ENCODE measurements at regions of chr3 and their contacts with region 1.

Region 1: DNA sequence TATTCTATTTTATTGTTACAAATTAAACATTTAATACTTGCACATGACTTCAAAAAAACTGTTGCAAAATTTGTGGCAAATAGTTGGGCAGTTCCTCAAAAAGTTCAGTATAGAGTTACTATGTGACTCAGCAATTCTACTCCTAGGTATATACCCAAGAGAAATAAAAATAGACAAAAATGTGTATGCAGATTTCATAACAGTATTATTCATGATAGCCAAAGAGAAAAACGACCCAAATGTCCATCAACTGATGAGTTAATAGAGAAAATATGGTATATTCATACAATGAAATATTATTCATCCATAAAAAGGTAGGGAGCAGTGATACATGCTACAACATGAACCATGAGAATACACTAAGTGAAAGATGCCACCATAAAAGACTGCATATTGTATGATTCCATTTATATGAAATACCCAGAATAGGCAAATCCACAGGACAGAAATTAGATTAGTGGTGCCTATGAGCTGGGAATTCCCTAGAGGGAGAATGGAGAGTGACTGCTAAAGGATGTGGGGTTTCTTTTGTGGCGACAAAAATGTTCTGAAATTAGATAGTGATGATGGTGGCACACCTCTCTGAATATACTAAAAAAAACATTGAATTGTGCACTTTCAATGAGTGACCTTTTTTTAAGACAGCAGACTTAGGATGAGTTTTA is 31.6 kb upstream of the CLASP2 start:
- DNase-seq: no peak
- H3K4me3 Mint-ChIP-seq: no peak overlapping the region
- H3K27ac Mint-ChIP-seq: no peak overlapping the region
- H3K4me1 Mint-ChIP-seq: peaks cover 10% of the 10 kb centered on the region
- H3K27me3 Mint-ChIP-seq: no peaks in the 10 kb centered on the region

Region 2: DNA sequence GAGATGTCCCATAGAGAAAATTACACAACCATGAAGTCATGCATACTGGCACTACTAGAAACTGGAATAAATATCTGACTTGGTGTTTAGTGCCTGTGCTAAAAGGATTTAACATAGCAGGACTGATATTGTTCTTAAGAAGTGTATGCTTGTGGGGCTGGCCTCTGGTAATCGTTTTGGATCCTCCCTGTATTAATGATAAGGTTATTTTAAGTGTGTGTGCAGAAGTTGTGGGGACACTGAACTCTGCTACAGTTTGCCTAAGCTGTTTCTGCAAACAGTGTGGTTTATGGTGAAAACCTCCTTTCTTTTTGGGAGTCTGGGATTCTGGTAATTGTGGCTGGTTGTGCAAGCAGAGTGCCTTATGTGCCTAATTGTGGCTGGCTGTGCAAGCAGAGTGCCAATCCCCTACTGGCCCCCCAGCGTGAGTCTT is 152.4 kb before region 1 on chr3:
- intact Hi-C with region 1: no loop called
- DNase-seq: no peak
- H3K4me3 Mint-ChIP-seq: no peak overlapping the region
- H3K27ac Mint-ChIP-seq: no peak overlapping the region
- H3K4me1 Mint-ChIP-seq: no peaks in the 10 kb centered on the region
- H3K27me3 Mint-ChIP-seq: no peaks in the 10 kb centered on the region

Region 3: DNA sequence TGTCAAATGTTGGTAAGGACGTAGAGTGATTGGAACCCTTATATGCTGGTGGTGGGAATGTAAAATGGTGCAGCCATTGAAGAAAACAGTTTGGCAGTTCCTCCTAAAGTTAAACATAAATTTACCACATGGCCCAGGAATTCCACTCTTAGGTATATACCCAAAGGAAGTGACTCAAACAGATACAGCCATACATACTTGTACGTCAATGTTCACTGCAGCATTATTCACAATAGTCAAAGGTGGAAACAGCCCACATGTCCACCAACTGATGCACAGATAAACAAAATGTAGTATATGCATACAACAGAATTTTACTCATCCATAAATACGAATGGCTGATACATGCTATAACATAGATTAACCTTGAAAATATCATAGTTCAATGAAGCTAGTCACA is 44.8 kb before region 1 on chr3:
- intact Hi-C with region 1: loop called (anchors 2 kb)
- DNase-seq: no peak
- H3K4me3 Mint-ChIP-seq: no peak overlapping the region
- H3K27ac Mint-ChIP-seq: no peak overlapping the region
- H3K4me1 Mint-ChIP-seq: peaks cover 10% of the 10 kb centered on the region
- H3K27me3 Mint-ChIP-seq: no peaks in the 10 kb centered on the region

Region 4: DNA sequence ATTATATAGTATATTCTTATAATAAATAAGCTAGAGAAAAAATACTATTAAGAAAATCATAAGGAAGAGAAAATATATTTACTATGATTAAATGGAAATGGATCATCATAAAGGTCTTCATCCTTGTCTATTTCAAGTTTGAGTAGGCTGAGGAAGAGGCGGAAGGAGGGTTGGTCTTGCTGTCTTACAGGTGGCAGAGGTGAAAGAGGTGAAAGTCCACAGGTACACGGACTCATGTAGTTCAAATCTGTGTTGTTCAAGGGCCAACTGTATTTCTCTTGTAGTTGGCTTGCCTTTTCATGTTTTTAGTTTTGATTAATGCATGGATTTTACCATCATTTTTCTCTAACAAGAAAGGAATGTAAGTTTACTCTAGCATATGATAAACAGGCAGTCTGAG is 90.5 kb after region 1 on chr3:
- intact Hi-C with region 1: no loop called
- DNase-seq: no peak
- H3K4me3 Mint-ChIP-seq: no peak overlapping the region
- H3K27ac Mint-ChIP-seq: no peak overlapping the region
- H3K4me1 Mint-ChIP-seq: peaks cover 3% of the 10 kb centered on the region
- H3K27me3 Mint-ChIP-seq: no peaks in the 10 kb centered on the region

Measured in activated T-helper 2 cell treated with anti-CD3 and anti-CD28 coated beads, Interferon-gamma antibody, Interleukin-2, Interleukin-4, amounts not matched to agents 10 μg/mL and 5 μg/mL and 100 μg/mL, durations not matched to agents 14 hours and 24 hours and 36 hours (primary cell).